ENCODE measurements at regions of chr1 and their contacts with region 1.

Region 1: DNA sequence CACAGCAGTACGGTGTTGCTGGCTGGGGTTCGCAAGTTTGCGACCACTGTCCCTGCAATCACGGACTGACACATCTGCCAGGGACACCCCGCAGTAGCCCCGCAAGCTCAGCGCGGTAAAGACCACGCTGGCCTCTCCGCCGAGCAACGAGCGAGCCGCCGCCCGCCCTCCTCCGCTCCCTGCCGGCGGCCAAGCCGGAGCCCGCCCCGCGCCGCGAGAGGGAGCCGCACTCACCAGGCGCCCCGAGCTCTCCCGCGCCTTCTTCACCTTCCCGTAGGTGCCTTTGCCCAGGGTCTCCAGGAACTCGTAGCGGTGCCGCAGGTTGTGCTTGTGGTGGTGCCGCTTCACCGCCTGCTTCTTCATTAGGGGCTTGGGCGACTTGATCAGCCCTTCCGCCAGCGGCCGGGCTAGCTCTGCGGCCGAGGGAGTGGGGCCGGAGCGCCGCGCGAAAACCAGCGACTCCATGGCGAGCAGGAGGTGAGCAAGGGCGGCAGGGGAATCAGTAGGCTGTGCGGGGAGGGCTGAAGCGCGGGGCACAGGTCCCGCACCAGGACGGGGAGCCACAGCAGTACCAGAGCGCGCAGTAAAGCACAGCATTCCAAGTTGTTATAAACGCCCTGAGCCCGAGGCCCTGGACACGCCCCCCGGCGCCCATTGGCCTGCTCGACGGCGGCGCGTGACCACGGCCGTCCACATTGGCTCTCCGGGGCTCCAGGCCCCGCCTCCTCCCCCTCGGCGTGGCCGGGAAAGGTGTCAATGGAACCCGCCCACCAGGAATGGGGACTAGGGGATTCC is at the start of gene NUAK2:
- DNase-seq: peak; percentile 81
- H3K4me3 Mint-ChIP-seq: peak within 1 kb of the TSS; percentile 98
- H3K27ac Mint-ChIP-seq: peak within 1 kb of the TSS; percentile 90
- H3K4me1 Mint-ChIP-seq: peaks cover 65% of the 10 kb centered on the region
- H3K27me3 Mint-ChIP-seq: peaks cover 6% of the 10 kb centered on the region
- total RNA-seq, gene NUAK2: 12.1 to 12.7 TPM

Region 2: GRCh38 chr1:205261946-205262691 is 59.2 kb before region 1 on chr1:
- CTCF ChIA-PET with region 1: interaction called, 12 read pairs
- POLR2A ChIA-PET with region 1: no interaction called
- DNase-seq: no peak
- H3K4me3 Mint-ChIP-seq: no peak overlapping the region
- H3K27ac Mint-ChIP-seq: no peak overlapping the region
- H3K4me1 Mint-ChIP-seq: peaks cover 17% of the 10 kb centered on the region
- H3K27me3 Mint-ChIP-seq: peaks cover 4% of the 10 kb centered on the region

Region 3: GRCh38 chr1:205335643-205336091 is 14.3 kb after region 1 on chr1:
- CTCF ChIA-PET with region 1: interaction called, 24 read pairs
- POLR2A ChIA-PET with region 1: interaction called, 3 read pairs
- DNase-seq: peak; percentile 84
- H3K4me3 Mint-ChIP-seq: no peak overlapping the region
- H3K27ac Mint-ChIP-seq: no peak overlapping the region
- H3K4me1 Mint-ChIP-seq: no peaks in the 10 kb centered on the region
- H3K27me3 Mint-ChIP-seq: peaks cover 16% of the 10 kb centered on the region